ENCODE measurements at regions of chr22 and their contacts with region 1.

Region 1: DNA sequence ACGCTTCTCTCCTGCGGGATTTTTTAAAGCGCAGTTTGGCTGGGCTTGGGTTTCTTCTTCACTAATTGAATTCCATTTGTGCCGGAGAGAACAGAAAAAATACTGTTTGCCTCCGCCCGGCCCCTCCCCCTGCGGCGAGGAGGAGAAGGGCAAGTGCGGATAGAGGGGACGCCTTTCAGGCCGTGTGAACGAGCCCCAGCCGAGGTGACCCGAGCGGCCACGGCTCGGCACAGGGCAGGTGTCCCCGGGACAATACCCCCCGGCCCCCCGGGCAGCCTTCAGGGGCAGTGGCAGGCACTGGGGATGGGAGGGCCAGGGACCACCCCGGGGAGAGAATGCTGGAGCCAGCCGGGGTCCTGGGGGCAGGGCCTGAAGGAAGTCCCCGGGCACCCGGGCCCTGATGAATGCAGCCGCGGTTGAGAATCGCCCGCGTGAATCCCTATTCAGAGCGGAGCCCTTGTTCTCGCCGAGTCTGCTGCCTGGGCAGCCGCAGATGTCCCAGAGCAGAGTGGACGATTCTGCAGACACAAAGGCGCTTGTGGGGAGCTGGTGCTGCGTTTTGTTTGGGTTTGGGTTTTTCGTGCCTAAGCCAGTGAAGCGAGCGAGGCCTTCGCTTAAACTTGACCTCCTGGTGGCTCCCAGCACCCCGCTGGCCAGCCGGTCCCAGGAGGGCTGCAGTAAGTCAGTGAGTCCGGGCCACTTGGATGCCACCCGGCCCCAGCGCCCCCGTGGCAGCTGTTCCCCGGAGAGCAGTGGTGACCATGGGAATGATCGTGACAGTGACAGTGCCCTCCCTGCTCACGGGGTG is 96.0 kb downstream of the WNT7B start:
- DNase-seq: peak; percentile 31 to 62
- ATAC-seq: no peak
- H3K4me3 ChIP-seq: no peak overlapping the region
- H3K27ac ChIP-seq: no peak overlapping the region
- H3K4me1 ChIP-seq: no peaks in the 10 kb centered on the region
- H3K27me3 ChIP-seq: no peaks in the 10 kb centered on the region

Region 2: GRCh38 chr22:45957826-45958225 is 76.9 kb after region 1 on chr22:
- intact Hi-C with region 1: loop called in 1 of 2 experiments (anchors 5 kb)
- DNase-seq: no peak
- ATAC-seq: no peak
- H3K4me3 ChIP-seq: no peak overlapping the region
- H3K27ac ChIP-seq: no peak overlapping the region
- H3K4me1 ChIP-seq: no peaks in the 10 kb centered on the region
- H3K27me3 ChIP-seq: no peaks in the 10 kb centered on the region